CD4-positive, alpha-beta memory T cell (primary cell): ENCODE measurements at regions of chr10 and their contacts with region 1.

Region 1: DNA sequence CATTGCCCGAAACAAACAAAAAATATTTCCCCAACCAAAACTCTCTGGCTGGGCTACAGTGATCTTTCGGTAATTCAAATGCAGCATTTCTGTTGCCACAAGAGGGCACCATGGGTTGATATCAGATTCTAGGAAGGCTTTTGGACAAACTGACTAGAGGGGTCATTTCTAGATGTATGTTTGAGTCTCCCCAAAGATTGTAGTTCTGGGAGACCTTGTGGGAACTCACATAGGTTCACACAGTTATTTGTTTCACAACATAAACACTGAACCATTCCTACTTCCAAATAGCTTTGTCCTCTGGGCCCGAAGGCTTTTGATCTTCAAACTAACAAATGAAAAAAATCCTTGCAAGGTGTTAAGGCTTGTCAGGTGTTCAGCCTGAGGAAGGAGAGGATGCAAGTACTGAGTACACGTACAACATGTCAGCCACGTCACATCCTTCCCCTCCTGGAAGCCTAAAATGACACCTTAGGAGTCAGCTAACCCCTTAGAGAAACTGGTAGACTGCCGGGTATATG is 37.0 kb upstream of the IL15RA start:
- DNase-seq: peak; percentile 76 to 92 (median 83)
- H3K4me3 ChIP-seq: no peak overlapping the region
- H3K4me3 Mint-ChIP-seq: peak overlapping the region in 6 of 8 donors; percentile 26 to 82 (median 40)
- H3K27ac ChIP-seq: peak overlapping the region; percentile 70
- H3K27ac Mint-ChIP-seq: peak overlapping the region; percentile 92 to 99 (median 97)
- H3K4me1 ChIP-seq: peaks cover 23% of the 10 kb centered on the region
- H3K4me1 Mint-ChIP-seq: peaks cover 16 to 41% (median 20%) of the 10 kb centered on the region in 4 donors
- H3K27me3 ChIP-seq: no peaks in the 10 kb centered on the region
- H3K27me3 Mint-ChIP-seq: no peaks in the 10 kb centered on the region

Region 2: DNA sequence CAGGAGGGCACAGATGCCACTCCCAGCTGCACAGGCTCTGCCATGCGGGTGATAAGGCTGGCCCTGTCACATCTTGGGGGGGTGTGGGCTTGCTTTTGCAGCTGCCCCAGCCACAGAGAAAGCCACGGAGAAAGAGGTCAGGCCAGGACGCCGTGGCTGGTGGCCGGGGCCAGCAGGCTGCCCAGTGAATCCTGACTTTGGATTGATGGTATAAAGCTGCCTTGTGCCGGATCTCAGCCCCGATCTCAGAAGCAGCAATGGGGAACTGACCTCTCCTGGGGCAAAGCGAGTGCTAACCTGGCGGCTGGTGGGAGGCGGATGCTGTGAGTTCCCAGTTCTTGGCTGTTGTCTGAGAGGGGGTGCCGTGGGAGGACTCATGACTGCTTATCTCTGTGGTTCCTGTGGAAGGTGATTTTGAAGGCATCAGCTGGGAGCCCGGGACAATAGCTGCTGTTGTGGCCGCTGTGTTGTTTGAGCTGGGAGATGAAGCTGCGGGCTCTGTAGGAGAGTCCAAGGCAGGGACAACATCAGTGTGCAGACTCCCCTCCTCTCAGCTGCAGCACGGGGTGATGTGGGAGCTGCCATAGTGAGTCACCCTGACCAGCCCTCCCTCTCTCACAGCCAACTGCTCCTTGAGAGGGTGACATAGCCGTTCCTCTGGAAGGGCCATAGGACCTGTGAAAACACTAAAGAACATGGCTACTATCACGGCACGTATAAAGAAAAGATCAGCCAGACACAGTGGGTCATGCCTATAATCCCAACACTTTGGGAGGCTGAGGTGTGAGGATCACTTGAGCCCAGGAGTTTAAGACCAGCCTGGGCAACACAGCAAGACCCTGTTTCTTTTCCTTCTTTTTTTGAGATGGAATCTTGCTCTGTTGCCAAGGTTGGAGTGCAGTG is 54.0 kb before region 1 on chr10:
- CTCF ChIA-PET with region 1: no interaction called
- POLR2A ChIA-PET with region 1: no interaction called
- intact Hi-C with region 1: no loop called
- DNase-seq: no peak
- H3K4me3 ChIP-seq: no peak overlapping the region
- H3K4me3 Mint-ChIP-seq: no peak overlapping the region
- H3K27ac ChIP-seq: no peak overlapping the region
- H3K27ac Mint-ChIP-seq: peak overlapping the region in 2 of 7 donors; percentile 29 to 79
- H3K4me1 ChIP-seq: no peaks in the 10 kb centered on the region
- H3K4me1 Mint-ChIP-seq: peaks cover 0 to 1% (median 0%) of the 10 kb centered on the region in 4 donors
- H3K27me3 ChIP-seq: no peaks in the 10 kb centered on the region
- H3K27me3 Mint-ChIP-seq: no peaks in the 10 kb centered on the region

Region 3: DNA sequence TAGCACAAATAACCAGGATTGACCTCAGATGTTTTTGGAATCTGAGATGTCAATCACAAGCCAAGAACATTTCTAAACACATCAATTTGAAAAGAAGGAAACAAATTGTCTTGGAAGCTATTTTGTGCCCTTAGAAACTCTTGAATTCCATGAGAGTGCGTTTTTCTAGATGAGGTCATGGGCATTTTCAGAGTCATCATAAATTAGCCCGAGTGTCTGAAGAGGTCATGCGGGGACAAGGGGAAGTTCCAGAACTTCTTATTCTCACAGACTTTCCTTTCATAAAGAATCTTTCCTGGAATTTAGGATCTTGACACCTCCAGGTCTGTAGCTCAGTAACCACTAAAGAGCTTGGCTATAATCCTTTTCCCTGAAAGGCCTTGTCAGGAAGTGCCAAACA is 19.7 kb after region 1 on chr10:
- CTCF ChIA-PET with region 1: interaction called, 33 read pairs
- POLR2A ChIA-PET with region 1: interaction called, 13 read pairs
- intact Hi-C with region 1: loop called (anchors 1 kb)
- DNase-seq: no peak
- H3K4me3 ChIP-seq: no peak overlapping the region
- H3K4me3 Mint-ChIP-seq: no peak overlapping the region
- H3K27ac ChIP-seq: no peak overlapping the region
- H3K27ac Mint-ChIP-seq: peak overlapping the region in 5 of 7 donors; percentile 37 to 82 (median 60)
- H3K4me1 ChIP-seq: peaks cover 61% of the 10 kb centered on the region
- H3K4me1 Mint-ChIP-seq: peaks cover 28 to 78% (median 57%) of the 10 kb centered on the region in 4 donors
- H3K27me3 ChIP-seq: no peaks in the 10 kb centered on the region
- H3K27me3 Mint-ChIP-seq: no peaks in the 10 kb centered on the region

Region 4: GRCh38 chr10:6045314-6045848 is 31.1 kb after region 1 on chr10:
- CTCF ChIA-PET with region 1: interaction called, 106 read pairs
- POLR2A ChIA-PET with region 1: interaction called, 56 read pairs
- intact Hi-C with region 1: no loop called
- DNase-seq: peak in 1 of 5 donors; percentile 33
- H3K4me3 ChIP-seq: peak overlapping the region; percentile 23 to 32
- H3K4me3 Mint-ChIP-seq: peak overlapping the region; percentile 45 to 84 (median 76)
- H3K27ac ChIP-seq: peak overlapping the region; percentile 21
- H3K27ac Mint-ChIP-seq: peak overlapping the region; percentile 73 to 87 (median 83)
- H3K4me1 ChIP-seq: peaks cover 88% of the 10 kb centered on the region
- H3K4me1 Mint-ChIP-seq: peaks cover 50 to 90% (median 67%) of the 10 kb centered on the region in 4 donors
- H3K27me3 ChIP-seq: no peaks in the 10 kb centered on the region
- H3K27me3 Mint-ChIP-seq: no peaks in the 10 kb centered on the region

Region 5: GRCh38 chr10:6062101-6062771 is 47.9 kb after region 1 on chr10 and contains the start of gene IL2RA:
- CTCF ChIA-PET with region 1: interaction called, 14 read pairs
- POLR2A ChIA-PET with region 1: interaction called, 3 read pairs
- intact Hi-C with region 1: loop called (anchors 1 kb)
- DNase-seq: peak; percentile 69 to 86 (median 75)
- H3K4me3 ChIP-seq: peak within 1 kb of the TSS; percentile 71 to 89
- H3K4me3 Mint-ChIP-seq: peak within 1 kb of the TSS; percentile 97 to 99 (median 98)
- H3K27ac ChIP-seq: peak within 1 kb of the TSS; percentile 83
- H3K27ac Mint-ChIP-seq: peak within 1 kb of the TSS; percentile 95 to 98 (median 96)
- H3K4me1 ChIP-seq: peaks cover 80% of the 10 kb centered on the region
- H3K4me1 Mint-ChIP-seq: peaks cover 44 to 88% (median 65%) of the 10 kb centered on the region in 4 donors
- H3K27me3 ChIP-seq: no peaks in the 10 kb centered on the region
- H3K27me3 Mint-ChIP-seq: no peaks in the 10 kb centered on the region
- total RNA-seq, gene IL2RA: 15.1 to 17.1 TPM

Region 6: GRCh38 chr10:6068422-6068821 is 54.1 kb after region 1 on chr10:
- CTCF ChIA-PET with region 1: interaction called, 17 read pairs
- POLR2A ChIA-PET with region 1: interaction called, 6 read pairs
- intact Hi-C with region 1: no loop called
- DNase-seq: peak; percentile 48 to 73 (median 60)
- H3K4me3 ChIP-seq: peak overlapping the region; percentile 12 to 27
- H3K4me3 Mint-ChIP-seq: peak overlapping the region; percentile 69 to 86 (median 82)
- H3K27ac ChIP-seq: no peak overlapping the region
- H3K27ac Mint-ChIP-seq: peak overlapping the region; percentile 36 to 89 (median 82)
- H3K4me1 ChIP-seq: peaks cover 81% of the 10 kb centered on the region
- H3K4me1 Mint-ChIP-seq: peaks cover 58 to 91% (median 70%) of the 10 kb centered on the region in 4 donors
- H3K27me3 ChIP-seq: no peaks in the 10 kb centered on the region
- H3K27me3 Mint-ChIP-seq: no peaks in the 10 kb centered on the region

Region 7: DNA sequence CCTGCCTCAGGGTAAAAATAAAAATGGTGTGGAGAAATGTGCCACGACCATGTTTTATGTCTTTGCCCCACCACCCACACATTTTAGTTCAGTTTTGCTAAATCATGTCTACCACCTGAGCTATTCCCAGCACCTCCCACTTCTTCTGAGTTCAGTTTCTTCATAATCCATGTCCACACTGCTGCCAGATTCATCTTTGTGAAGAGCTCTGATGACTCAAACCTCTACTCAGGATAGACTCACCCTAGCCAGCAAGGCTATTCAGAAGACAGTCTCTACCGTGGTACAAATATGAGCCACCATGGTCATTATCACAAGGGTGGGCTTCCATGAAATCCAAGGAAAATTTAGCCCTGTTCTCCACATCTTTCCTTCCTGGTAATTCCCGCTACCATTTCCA is 796.9 kb after region 1 on chr10:
- CTCF ChIA-PET with region 1: no interaction called
- POLR2A ChIA-PET with region 1: no interaction called
- intact Hi-C with region 1: no loop called
- DNase-seq: no peak
- H3K4me3 ChIP-seq: no peak overlapping the region
- H3K4me3 Mint-ChIP-seq: no peak overlapping the region
- H3K27ac ChIP-seq: no peak overlapping the region
- H3K27ac Mint-ChIP-seq: no peak overlapping the region
- H3K4me1 ChIP-seq: no peaks in the 10 kb centered on the region
- H3K4me1 Mint-ChIP-seq: no peaks in the 10 kb centered on the region
- H3K27me3 ChIP-seq: no peaks in the 10 kb centered on the region
- H3K27me3 Mint-ChIP-seq: peaks cover 26 to 32% of the 10 kb centered on the region in 2 donors